Naive thymus-derived CD4-positive, alpha-beta T cell (primary cell): ENCODE measurements at regions of chr17 and their contacts with region 1.

Region 1: GRCh38 chr17:68865584-68865983 is 89.6 kb downstream of the ABCA8 start:
- DNase-seq: no peak
- ATAC-seq: no peak
- H3K4me3 ChIP-seq: no peak overlapping the region
- H3K4me3 Mint-ChIP-seq: no peak overlapping the region
- H3K27ac ChIP-seq: no peak overlapping the region
- H3K27ac Mint-ChIP-seq: no peak overlapping the region
- H3K4me1 ChIP-seq: no peaks in the 10 kb centered on the region
- H3K4me1 Mint-ChIP-seq: no peaks in the 10 kb centered on the region
- H3K27me3 ChIP-seq: no peaks in the 10 kb centered on the region
- H3K27me3 Mint-ChIP-seq: peaks cover 0 to 13% (median 5%) of the 10 kb centered on the region in 5 donors

Region 2: DNA sequence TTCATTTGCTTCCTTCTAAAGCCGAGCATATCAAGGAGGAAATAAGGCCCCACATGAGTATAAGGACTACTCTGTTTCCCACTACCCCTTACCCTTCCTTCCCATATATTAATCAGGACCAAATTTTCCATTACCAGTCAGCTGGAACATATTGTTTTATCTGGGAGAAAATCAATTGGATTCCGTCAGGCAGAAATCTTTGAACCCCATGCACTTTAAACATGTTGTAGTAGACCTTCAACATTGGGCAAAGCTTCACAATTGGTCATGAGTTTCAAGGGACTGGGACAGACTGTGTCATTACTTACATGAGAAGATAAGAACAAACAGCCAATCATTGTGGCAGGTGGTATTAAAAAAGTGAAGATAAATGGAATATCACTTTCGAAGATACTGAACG is 19.3 kb after region 1 on chr17:
- CTCF ChIA-PET with region 1: no interaction called
- POLR2A ChIA-PET with region 1: no interaction called
- intact Hi-C with region 1: loop called in 1 of 2 experiments (anchors 1 kb)
- DNase-seq: no peak
- ATAC-seq: no peak
- H3K4me3 ChIP-seq: no peak overlapping the region
- H3K4me3 Mint-ChIP-seq: no peak overlapping the region
- H3K27ac ChIP-seq: no peak overlapping the region
- H3K27ac Mint-ChIP-seq: no peak overlapping the region
- H3K4me1 ChIP-seq: no peaks in the 10 kb centered on the region
- H3K4me1 Mint-ChIP-seq: peaks cover 0 to 1% (median 0%) of the 10 kb centered on the region in 7 donors
- H3K27me3 ChIP-seq: no peaks in the 10 kb centered on the region
- H3K27me3 Mint-ChIP-seq: peaks cover 0 to 23% (median 6%) of the 10 kb centered on the region in 5 donors

Region 3: GRCh38 chr17:68993112-68993511 is 127.5 kb after region 1 on chr17:
- CTCF ChIA-PET with region 1: no interaction called
- POLR2A ChIA-PET with region 1: no interaction called
- intact Hi-C with region 1: no loop called
- DNase-seq: no peak
- ATAC-seq: no peak
- H3K4me3 ChIP-seq: no peak overlapping the region
- H3K4me3 Mint-ChIP-seq: no peak overlapping the region
- H3K27ac ChIP-seq: no peak overlapping the region
- H3K27ac Mint-ChIP-seq: no peak overlapping the region
- H3K4me1 ChIP-seq: no peaks in the 10 kb centered on the region
- H3K4me1 Mint-ChIP-seq: no peaks in the 10 kb centered on the region
- H3K27me3 ChIP-seq: no peaks in the 10 kb centered on the region
- H3K27me3 Mint-ChIP-seq: no peaks in the 10 kb centered on the region